PC-3 (cell line): ENCODE measurements at regions of chr14 and their contacts with region 1.

Region 1: DNA sequence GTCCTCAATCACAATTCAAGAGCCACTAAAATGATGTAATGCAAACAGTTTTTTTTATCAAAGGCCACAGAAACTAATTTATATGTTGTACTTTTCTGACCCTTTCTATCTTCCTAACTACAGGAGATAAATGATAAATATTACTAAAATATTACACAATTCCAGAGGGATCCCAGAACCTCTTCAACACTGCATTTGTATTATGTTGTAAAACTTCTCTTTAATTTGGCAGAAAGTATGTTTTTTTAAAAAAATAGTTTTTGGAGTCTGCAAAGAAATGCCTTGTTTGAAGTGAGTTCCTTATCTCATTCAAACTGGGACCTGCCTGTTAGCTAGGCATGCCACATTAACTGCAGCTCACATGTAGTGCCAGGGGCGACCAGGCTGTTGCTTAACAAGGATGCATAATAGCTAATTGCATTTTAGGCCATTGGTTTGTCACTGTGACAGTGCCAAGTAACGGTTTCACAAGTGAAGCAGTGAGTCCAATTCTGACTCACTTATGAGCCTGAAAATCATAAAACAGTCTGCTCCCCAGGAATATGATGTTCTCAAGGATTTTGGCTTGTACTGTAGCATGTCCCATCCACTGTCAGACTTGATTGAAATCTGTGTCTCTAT is 266.9 kb downstream of the KTN1 start:
- DNase-seq: peak; percentile 55
- ATAC-seq: peak; percentile 40
- H3K4me3 ChIP-seq: no peak overlapping the region
- H3K27ac ChIP-seq: peak overlapping the region; percentile 56
- H3K4me1 ChIP-seq: peaks cover 32% of the 10 kb centered on the region
- H3K27me3 ChIP-seq: no peaks in the 10 kb centered on the region
- CTCF ChIP-seq: no peak

Region 2: DNA sequence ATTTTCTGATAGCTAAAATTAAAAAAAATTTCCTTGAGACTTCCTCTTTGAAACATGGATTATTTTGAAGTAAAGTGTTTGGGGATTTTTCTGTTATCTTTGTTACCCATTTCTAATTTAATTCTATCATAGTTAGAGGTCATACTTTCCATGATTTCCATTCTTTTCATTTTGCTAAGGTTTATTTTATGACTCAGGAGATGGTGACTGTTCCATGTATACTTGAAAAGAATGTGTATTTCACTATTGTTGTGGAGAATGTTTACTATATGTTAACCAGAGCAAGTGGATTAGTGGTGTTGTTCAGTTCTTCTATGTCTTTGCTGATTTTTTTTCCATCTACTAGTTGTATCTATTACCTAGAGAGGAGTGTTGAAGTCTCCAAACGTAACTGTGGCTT is 20.8 kb after region 1 on chr14:
- CTCF ChIA-PET with region 1: interaction called, 3 read pairs
- POLR2A ChIA-PET with region 1: interaction called, 5 read pairs
- intact Hi-C with region 1: loop called (anchors 2 kb)
- DNase-seq: peak; percentile 80
- ATAC-seq: peak; percentile 91
- H3K4me3 ChIP-seq: no peak overlapping the region
- H3K27ac ChIP-seq: no peak overlapping the region
- H3K4me1 ChIP-seq: peaks cover 25% of the 10 kb centered on the region
- H3K27me3 ChIP-seq: no peaks in the 10 kb centered on the region
- CTCF ChIP-seq: no peak

Region 3: GRCh38 chr14:56339855-56340701 is 493.1 kb after region 1 on chr14:
- CTCF ChIA-PET with region 1: no interaction called
- POLR2A ChIA-PET with region 1: no interaction called
- intact Hi-C with region 1: no loop called
- DNase-seq: peak; percentile 89
- ATAC-seq: peak; percentile 96
- H3K4me3 ChIP-seq: no peak overlapping the region
- H3K27ac ChIP-seq: no peak overlapping the region
- H3K4me1 ChIP-seq: peaks cover 3% of the 10 kb centered on the region; the same call in 1 of the 2 replicates
- H3K27me3 ChIP-seq: peaks cover 19% of the 10 kb centered on the region; the same call in 1 of the 2 replicates
- CTCF ChIP-seq: peak; percentile 99